Natural killer cell (primary cell): ENCODE measurements at regions of chr20 and their contacts with region 1.

Region 1: GRCh38 chr20:15071085-15071808 is 733.8 kb upstream of the FLRT3 start:
- DNase-seq: no peak
- ATAC-seq: no peak
- H3K4me3 ChIP-seq: no peak overlapping the region
- H3K4me3 Mint-ChIP-seq: no peak overlapping the region
- H3K27ac ChIP-seq: no peak overlapping the region
- H3K27ac Mint-ChIP-seq: no peak overlapping the region
- H3K4me1 ChIP-seq: no peaks in the 10 kb centered on the region
- H3K4me1 Mint-ChIP-seq: no peaks in the 10 kb centered on the region
- H3K27me3 ChIP-seq: no peaks in the 10 kb centered on the region
- H3K27me3 Mint-ChIP-seq: no peaks in the 10 kb centered on the region
- CTCF ChIP-seq: no peak

Region 2: DNA sequence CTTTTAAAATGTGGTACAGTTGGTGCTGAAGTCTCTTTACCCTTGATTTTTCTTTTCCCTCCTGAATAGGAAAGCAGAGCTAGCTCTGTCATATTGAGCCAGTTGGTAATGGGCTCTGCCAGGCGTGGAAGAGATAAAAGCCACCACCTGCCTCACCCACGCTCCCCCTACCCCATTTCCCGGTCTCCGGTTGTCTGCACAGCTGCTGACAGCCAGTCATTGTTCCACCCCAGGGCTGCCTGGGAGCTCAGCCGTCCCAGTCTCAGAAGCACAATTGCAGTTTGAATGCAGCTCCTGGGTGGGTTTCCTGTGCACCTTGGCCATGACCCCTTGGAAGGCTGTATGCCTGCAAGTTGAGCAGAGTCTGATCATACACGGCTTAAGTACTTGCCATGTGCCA is 58.7 kb before region 1 on chr20:
- intact Hi-C with region 1: loop called (anchors 10 kb)
- DNase-seq: no peak
- ATAC-seq: no peak
- H3K4me3 ChIP-seq: no peak overlapping the region
- H3K4me3 Mint-ChIP-seq: no peak overlapping the region
- H3K27ac ChIP-seq: no peak overlapping the region
- H3K27ac Mint-ChIP-seq: no peak overlapping the region
- H3K4me1 ChIP-seq: no peaks in the 10 kb centered on the region
- H3K4me1 Mint-ChIP-seq: no peaks in the 10 kb centered on the region
- H3K27me3 ChIP-seq: no peaks in the 10 kb centered on the region
- H3K27me3 Mint-ChIP-seq: no peaks in the 10 kb centered on the region
- CTCF ChIP-seq: no peak

Region 3: DNA sequence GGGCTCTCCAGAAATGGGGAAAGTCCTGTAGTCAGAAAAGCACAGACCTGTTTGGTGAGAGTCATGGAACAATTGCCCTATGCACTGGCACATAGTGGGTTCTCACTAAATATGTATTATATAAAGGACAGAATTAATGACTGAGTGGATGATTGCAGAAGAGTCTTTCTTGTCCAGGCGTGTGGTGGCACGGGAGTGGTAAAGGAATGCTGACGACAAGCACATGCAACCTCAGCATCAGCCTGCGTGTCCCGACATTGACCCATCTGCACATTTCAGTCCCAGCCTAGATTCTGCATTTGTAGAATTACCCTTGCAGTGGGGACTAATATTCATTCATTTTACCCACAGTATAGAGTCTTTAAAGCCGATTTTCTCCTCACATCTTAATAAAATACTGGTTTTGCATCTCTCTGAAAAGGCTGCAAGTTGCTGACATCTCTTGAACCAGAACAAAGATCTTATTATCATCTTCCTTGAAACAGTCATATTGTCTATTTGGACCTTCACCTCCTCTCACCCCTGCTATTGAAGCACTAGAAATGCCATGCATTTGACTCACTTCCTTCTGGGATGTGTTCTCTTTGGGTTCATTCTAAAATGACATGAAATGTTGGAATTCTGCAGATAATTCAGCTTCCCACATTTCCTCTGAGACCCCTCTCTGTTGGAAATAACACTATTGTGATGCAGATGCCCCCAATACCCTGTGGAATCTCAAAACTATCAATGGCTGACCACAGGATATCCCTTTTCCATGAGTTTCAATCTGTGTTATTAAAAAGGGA is 149.7 kb after region 1 on chr20:
- intact Hi-C with region 1: no loop called
- DNase-seq: no peak
- ATAC-seq: no peak
- H3K4me3 ChIP-seq: no peak overlapping the region
- H3K4me3 Mint-ChIP-seq: no peak overlapping the region
- H3K27ac ChIP-seq: no peak overlapping the region
- H3K27ac Mint-ChIP-seq: no peak overlapping the region
- H3K4me1 ChIP-seq: no peaks in the 10 kb centered on the region
- H3K4me1 Mint-ChIP-seq: no peaks in the 10 kb centered on the region
- H3K27me3 ChIP-seq: no peaks in the 10 kb centered on the region
- H3K27me3 Mint-ChIP-seq: no peaks in the 10 kb centered on the region
- CTCF ChIP-seq: no peak